ENCODE measurements at regions of chr15 and their contacts with region 1.

Region 1: GRCh38 chr15:47620965-47621685 is 96.2 kb upstream of the SEMA6D start:
- DNase-seq: no peak
- H3K4me3 ChIP-seq: no peak overlapping the region
- H3K27ac ChIP-seq: peak overlapping the region in 10 of 59 donors; percentile 4 to 64 (median 36)
- H3K27me3 ChIP-seq: no peaks in the 10 kb centered on the region
- CTCF ChIP-seq: no peak

Region 2: DNA sequence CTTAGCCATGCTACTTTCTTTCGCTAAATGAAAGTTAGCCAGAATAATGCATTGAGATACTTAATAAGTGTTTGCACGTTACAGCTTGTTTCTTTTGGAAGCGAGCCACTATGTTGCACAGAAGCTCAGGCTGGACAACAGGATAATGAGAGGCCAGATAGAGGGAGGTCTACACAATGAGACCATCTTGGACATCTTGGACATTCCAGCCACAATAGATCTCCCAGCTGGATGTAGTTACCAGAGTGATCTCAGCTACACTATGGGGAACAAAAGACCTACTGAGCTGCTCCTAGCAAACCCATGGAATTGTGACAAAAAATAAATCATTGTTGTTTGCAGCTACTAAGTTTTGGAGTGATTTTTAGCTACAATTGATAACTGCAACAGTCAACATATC is 443.9 kb before region 1 on chr15:
- intact Hi-C with region 1: no loop called
- DNase-seq: no peak
- H3K4me3 ChIP-seq: peak overlapping the region in 2 of 59 donors; percentile 5 to 20
- H3K27ac ChIP-seq: no peak overlapping the region
- H3K27me3 ChIP-seq: peaks cover 0 to 8% (median 0%) of the 10 kb centered on the region in 45 donors
- CTCF ChIP-seq: no peak

Region 3: GRCh38 chr15:47542312-47542989 is 78.7 kb before region 1 on chr15:
- intact Hi-C with region 1: loop called in 1 of 2 experiments (anchors 10 kb)
- DNase-seq: no peak
- H3K4me3 ChIP-seq: no peak overlapping the region
- H3K27ac ChIP-seq: no peak overlapping the region
- H3K27me3 ChIP-seq: no peaks in the 10 kb centered on the region
- CTCF ChIP-seq: no peak

Region 4: GRCh38 chr15:47565949-47566348 is 55.2 kb before region 1 on chr15:
- intact Hi-C with region 1: loop called in 1 of 2 experiments (anchors 5 kb)
- DNase-seq: no peak
- H3K4me3 ChIP-seq: no peak overlapping the region
- H3K27ac ChIP-seq: no peak overlapping the region
- H3K27me3 ChIP-seq: no peaks in the 10 kb centered on the region
- CTCF ChIP-seq: no peak

Region 5: GRCh38 chr15:47663101-47663500 is 42.0 kb after region 1 on chr15:
- intact Hi-C with region 1: no loop called
- DNase-seq: no peak
- H3K4me3 ChIP-seq: no peak overlapping the region
- H3K27ac ChIP-seq: no peak overlapping the region
- H3K27me3 ChIP-seq: no peaks in the 10 kb centered on the region
- CTCF ChIP-seq: no peak